Vagina (tissue), 2 donors: ENCODE measurements at regions of chr2 and their contacts with region 1.

Region 1: GRCh38 chr2:72220170-72220569 is 72.5 kb upstream of the CYP26B1 start:
- DNase-seq: no peak
- H3K4me3 ChIP-seq: no peak overlapping the region
- H3K27ac ChIP-seq: no peak overlapping the region
- H3K4me1 ChIP-seq: no peaks in the 10 kb centered on the region
- H3K27me3 ChIP-seq: no peaks in the 10 kb centered on the region
- CTCF ChIP-seq: no peak
- POLR2A ChIP-seq: no peak

Region 2: GRCh38 chr2:70418514-70418913 is 1801.7 kb before region 1 on chr2:
- intact Hi-C with region 1: loop called (anchors 5 kb)
- DNase-seq: no peak
- H3K4me3 ChIP-seq: no peak overlapping the region
- H3K27ac ChIP-seq: no peak overlapping the region
- H3K4me1 ChIP-seq: no peaks in the 10 kb centered on the region
- H3K27me3 ChIP-seq: no peaks in the 10 kb centered on the region
- CTCF ChIP-seq: no peak
- POLR2A ChIP-seq: no peak

Region 3: GRCh38 chr2:72129681-72130340 is 90.4 kb before region 1 on chr2:
- intact Hi-C with region 1: no loop called
- DNase-seq: no peak
- H3K4me3 ChIP-seq: no peak overlapping the region
- H3K27ac ChIP-seq: no peak overlapping the region
- H3K4me1 ChIP-seq: no peaks in the 10 kb centered on the region
- H3K27me3 ChIP-seq: no peaks in the 10 kb centered on the region
- CTCF ChIP-seq: no peak
- POLR2A ChIP-seq: no peak